ENCODE measurements at regions of chr17 and their contacts with region 1.

Region 1: DNA sequence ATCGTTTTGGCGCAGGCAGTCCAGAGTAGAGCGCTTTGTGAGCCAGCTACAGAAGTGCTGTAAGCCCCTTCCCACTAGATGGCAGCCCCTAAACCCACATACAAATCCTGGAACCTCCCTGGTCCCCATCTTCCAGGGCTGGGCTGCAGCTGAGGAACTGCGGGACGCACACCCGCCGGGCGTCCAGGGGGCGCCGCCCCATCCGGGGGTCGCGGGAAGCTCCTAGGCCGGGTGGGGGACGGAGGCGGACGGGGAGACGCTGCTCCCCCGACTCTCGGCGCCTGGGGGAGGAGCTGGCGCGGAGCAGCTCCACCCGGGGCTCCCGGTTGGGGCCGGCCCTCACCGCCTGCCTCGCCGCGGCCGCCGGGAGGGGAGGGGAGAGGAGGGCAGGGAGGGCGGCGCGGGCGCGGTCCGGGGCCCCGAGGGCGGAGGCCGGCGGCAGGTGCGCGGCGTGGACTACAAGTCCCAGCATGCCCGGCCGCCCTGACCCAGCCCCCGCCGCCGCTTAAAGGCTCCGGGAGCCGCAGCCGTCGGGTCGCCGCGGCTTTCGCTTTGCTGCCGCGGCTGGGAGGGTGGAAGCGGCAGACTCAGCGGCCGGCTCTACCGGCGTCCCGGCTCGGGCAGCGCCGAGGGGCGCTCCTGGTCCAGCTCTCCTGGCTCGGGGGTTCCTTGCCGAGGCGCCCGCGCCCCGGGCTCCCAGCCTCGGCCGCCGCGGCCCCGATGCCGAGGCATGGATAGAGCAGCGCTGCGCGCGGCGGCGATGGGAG is at the start of gene KSR1:
- DNase-seq: peak; percentile 93
- CTCF ChIP-seq: peak; percentile 39

Region 2: GRCh38 chr17:27466743-27467375 is 10.8 kb after region 1 on chr17:
- CTCF ChIA-PET with region 1: interaction called, 14 read pairs
- POLR2A ChIA-PET with region 1: interaction called, 10 read pairs
- DNase-seq: peak; percentile 80
- CTCF ChIP-seq: no peak

Region 3: GRCh38 chr17:27473748-27474609 is 17.9 kb after region 1 on chr17:
- CTCF ChIA-PET with region 1: interaction called, 14 read pairs
- POLR2A ChIA-PET with region 1: interaction called, 7 read pairs
- DNase-seq: peak; percentile 58
- CTCF ChIP-seq: no peak

Region 4: GRCh38 chr17:27616414-27616813 is 160.3 kb after region 1 on chr17:
- CTCF ChIA-PET with region 1: no interaction called
- POLR2A ChIA-PET with region 1: no interaction called
- DNase-seq: no peak
- CTCF ChIP-seq: no peak